Activated T-helper 1 cell treated with anti-CD3 and anti-CD28 coated beads, Interleukin-12 subunit alpha, Interleukin-12 subunit beta, Interleukin-2, Interleukin-4 antibody, amounts not matched to agents 30 ng/mL and 10 ng/mL and 1 ng/mL, durations not matched to agents 14 hours and 24 hours and 36 hours (primary cell): ENCODE measurements at regions of chr5 and their contacts with region 1.

Region 1: GRCh38 chr5:141641634-141642267 is 5.0 kb downstream of the RELL2 start:
- DNase-seq: no peak
- H3K4me3 Mint-ChIP-seq: no peak overlapping the region
- H3K27ac Mint-ChIP-seq: peak overlapping the region; percentile 32
- H3K4me1 Mint-ChIP-seq: peaks cover 35% of the 10 kb centered on the region
- H3K27me3 Mint-ChIP-seq: no peaks in the 10 kb centered on the region

Region 2: GRCh38 chr5:141597394-141597793 is 44.4 kb before region 1 on chr5:
- intact Hi-C with region 1: loop called (anchors 1 kb)
- DNase-seq: no peak
- H3K4me3 Mint-ChIP-seq: no peak overlapping the region
- H3K27ac Mint-ChIP-seq: peak overlapping the region; percentile 5
- H3K4me1 Mint-ChIP-seq: peaks cover 66% of the 10 kb centered on the region
- H3K27me3 Mint-ChIP-seq: no peaks in the 10 kb centered on the region

Region 3: GRCh38 chr5:141605523-141606277 is 36.1 kb before region 1 on chr5:
- intact Hi-C with region 1: loop called (anchors 1 kb)
- DNase-seq: peak; percentile 76
- H3K4me3 Mint-ChIP-seq: peak overlapping the region; percentile 45
- H3K27ac Mint-ChIP-seq: peak overlapping the region; percentile 85
- H3K4me1 Mint-ChIP-seq: peaks cover 78% of the 10 kb centered on the region
- H3K27me3 Mint-ChIP-seq: no peaks in the 10 kb centered on the region